ENCODE measurements at regions of chr17 and their contacts with region 1.

Region 1: DNA sequence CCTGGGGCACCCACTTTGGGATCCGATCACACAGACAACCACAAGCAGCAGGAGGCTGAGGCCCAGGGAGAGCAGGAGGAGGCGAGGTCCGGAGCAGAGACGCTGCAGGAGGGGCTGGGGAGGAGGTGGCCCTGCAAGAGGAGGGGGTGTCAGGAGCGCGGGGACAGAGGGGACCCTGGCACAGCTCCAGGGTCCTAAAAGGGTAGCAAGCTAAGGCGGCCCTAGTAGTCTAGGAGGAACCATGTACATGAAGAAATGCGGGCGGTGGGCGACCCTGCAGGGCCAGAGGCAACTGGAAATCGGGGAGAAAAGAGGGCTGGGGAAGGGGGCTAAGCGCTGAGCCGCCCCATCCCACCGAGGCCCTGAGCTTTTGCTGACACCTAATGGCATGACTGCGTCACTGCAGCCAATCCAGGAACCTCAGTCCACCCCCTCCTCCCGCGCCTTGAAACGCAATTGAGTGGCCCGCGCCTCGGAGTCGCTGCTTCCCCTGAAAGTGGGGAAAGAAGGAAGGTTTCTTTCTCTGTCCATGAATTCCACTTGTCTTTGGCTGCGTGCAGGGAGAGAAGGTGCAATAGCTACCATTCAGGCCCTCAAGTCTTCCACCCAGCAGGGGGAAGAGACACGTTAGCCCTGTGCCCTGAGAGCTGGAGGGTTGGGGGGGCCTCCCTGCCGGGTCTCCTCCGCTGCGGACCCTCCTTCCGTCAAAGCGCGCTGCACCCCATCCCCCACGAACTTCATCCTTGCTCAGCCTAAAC is 1.8 kb downstream of the ASGR1 start:
- DNase-seq: peak; percentile 88
- H3K27ac ChIP-seq: no peak overlapping the region
- CTCF ChIP-seq: peak; percentile 93

Region 2: GRCh38 chr17:7004398-7005253 is 172.7 kb before region 1 on chr17:
- CTCF ChIA-PET with region 1: no interaction called
- POLR2A ChIA-PET with region 1: no interaction called
- DNase-seq: no peak
- H3K27ac ChIP-seq: 0 out of 2 replicates have a peak overlapping the region, but pooled peaks have one; percentile 19
- CTCF ChIP-seq: peak; percentile 69

Region 3: GRCh38 chr17:7045909-7046724 is 131.3 kb before region 1 on chr17:
- CTCF ChIA-PET with region 1: interaction called, 16 read pairs
- POLR2A ChIA-PET with region 1: no interaction called
- DNase-seq: peak; percentile 75
- H3K27ac ChIP-seq: no peak overlapping the region
- CTCF ChIP-seq: peak; percentile 78

Region 4: DNA sequence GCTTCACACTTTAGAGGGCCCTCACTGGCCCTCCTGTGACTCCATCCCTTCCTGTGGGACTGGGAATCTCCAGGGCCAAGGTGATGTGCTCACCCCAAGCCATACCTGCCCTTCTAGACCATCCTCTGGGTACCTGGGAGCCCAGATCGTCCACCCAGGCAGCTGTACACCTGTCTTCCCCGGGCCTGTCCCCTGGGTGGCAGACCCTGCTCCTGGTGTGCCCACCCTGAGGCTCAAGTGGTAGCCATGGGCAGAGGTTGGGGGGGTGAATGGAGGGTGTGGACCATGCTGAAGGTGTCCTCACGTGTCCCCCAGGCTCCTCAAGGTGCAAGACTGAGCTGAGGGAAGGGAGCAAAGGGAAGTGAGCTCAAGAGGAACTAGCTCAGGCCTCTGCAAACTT is 106.7 kb before region 1 on chr17:
- CTCF ChIA-PET with region 1: no interaction called
- POLR2A ChIA-PET with region 1: no interaction called
- DNase-seq: no peak
- H3K27ac ChIP-seq: no peak overlapping the region
- CTCF ChIP-seq: no peak

Region 5: DNA sequence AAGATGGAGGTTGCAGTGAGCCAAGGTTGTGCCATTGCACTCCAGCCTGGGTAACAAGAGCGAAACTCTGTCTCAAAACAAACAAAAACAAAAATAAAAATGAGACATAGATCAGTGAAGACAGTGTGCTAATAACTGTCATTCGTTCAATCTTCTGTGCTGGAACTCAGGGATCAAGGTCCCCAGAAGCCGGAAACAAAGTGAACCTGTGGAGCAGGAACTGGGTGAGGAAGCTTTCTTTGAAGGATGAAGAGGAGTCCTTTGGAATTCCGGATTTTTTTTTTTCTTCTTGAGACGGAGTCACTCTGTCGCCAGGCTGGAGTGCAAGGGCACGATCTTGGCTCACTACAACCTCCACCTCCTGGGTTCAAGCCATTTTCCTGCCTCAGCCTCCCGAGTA is 102.1 kb after region 1 on chr17:
- CTCF ChIA-PET with region 1: no interaction called
- POLR2A ChIA-PET with region 1: no interaction called
- DNase-seq: no peak
- H3K27ac ChIP-seq: peak overlapping the region; percentile 81
- CTCF ChIP-seq: no peak

Measured in RWPE1 (cell line).